ENCODE measurements at regions of chr3 and their contacts with region 1.

Region 1: DNA sequence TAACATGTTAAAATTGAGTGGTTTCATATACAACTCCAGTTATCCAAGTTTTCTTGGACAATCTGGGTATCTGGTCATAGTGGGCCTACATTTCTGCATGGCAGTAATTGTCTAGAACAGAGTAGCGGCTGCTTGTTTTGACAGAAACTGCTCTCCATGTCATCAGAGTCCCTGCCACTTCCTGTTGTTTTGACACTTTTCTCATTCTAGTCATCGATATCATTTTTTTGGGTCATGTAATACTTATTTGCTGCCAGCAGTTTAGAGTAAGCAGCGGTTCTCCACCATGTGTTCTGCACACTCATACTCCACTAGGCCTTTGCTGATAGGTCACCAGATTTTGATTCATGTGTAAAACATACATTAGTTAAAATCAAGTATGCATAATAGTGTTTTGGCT is 81.5 kb downstream of the SLC25A26 start:
- DNase-seq: peak; percentile 56
- H3K4me3 Mint-ChIP-seq: no peak overlapping the region
- H3K27ac Mint-ChIP-seq: peak overlapping the region; percentile 91
- H3K4me1 Mint-ChIP-seq: peaks cover 72% of the 10 kb centered on the region
- H3K27me3 Mint-ChIP-seq: no peaks in the 10 kb centered on the region

Region 2: DNA sequence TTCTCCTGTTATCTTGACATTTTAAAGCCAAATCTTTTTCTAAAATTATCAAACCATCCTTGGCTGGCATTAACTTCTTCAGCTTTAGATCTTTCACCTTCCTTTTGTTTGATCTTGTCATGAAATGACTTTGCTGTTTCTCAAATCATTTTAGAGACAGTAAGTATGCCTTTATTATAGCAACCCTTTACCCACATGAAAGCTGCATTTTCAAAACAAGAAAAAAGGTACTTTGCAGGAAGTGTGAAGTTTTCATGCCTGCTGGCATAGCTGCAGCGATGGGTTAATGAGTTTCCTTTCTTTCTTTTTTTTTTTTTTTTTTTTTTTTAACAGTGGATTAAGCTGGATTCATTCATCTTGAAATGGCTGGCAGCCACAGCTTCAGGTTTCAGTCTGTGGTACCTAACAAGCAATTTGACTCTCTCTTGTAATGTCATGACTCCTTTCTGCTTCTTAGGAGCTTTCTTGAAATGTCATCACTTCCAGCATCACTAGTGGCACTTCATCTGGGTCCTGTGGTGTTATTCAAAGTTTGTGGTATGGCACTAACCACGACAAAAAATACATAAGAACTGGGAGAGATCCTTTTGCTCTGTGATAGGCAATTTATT is 62.7 kb before region 1 on chr3:
- CTCF ChIA-PET with region 1: no interaction called
- intact Hi-C with region 1: loop called (anchors 1 kb)
- DNase-seq: peak; percentile 64
- H3K4me3 Mint-ChIP-seq: peak overlapping the region; percentile 5
- H3K27ac Mint-ChIP-seq: peak overlapping the region; percentile 86
- H3K4me1 Mint-ChIP-seq: peaks cover 30% of the 10 kb centered on the region
- H3K27me3 Mint-ChIP-seq: no peaks in the 10 kb centered on the region

Region 3: DNA sequence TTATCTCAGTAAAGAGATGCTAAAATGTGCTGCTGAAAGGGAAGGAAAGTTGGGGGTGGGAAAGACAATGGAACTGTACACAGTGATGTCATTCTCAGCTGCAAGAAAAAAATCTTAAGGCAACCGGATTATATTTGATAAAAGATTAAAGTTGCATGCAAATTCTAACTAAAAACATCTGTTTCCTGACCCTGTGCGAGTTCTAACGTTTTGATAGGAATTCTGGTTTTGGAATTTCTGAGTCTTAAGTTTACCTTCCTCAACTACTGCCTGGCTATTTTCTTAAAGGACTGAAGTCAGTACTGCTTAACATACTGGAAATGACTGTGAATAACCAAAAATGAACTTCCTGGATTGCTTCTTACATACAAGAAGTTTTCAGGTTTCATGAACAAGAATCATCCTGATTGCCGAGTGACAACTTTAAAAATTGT is 34.1 kb after region 1 on chr3:
- CTCF ChIA-PET with region 1: interaction called, 3 read pairs
- intact Hi-C with region 1: loop called (anchors 2 kb)
- DNase-seq: no peak
- H3K4me3 Mint-ChIP-seq: no peak overlapping the region
- H3K27ac Mint-ChIP-seq: peak overlapping the region; percentile 16
- H3K4me1 Mint-ChIP-seq: peaks cover 25% of the 10 kb centered on the region
- H3K27me3 Mint-ChIP-seq: no peaks in the 10 kb centered on the region

Region 4: DNA sequence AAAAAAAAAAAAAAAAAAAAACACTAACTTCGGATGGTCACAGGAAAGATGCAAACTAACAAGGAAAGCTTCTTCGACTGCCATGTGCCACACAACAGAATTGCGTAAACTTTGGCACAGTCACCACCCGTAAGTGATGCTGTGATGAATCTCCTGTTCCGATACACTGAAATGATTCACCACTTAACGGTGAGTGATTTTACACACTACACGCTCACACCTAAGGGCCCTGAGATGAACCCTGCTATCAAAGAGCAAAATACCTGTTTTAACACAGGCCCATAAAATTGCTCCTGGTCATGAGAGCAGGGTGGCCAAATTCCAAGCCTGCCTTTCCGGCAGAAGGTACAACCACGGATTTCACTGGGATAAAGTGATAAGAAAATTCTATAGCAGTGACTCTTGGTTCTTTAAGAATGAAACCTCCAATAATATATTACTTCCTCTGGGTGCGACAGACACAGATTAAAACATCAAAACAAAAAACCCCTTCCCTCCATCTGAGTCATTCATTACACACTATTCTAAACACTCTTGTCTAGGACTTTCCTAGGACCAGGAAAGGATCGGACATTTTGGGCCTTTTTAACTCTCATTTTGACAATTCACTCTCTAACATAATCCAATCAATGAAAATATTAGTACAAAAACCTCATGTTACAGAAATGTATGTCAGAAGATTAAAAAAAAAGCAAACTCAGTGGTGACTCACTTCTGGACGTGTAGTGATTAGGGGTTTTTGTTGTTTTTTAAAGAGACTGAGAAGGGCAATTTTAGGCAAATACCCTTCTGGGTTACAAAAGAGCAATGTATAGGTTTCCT is 170.2 kb after region 1 on chr3:
- CTCF ChIA-PET with region 1: no interaction called
- intact Hi-C with region 1: loop called (anchors 1 kb)
- DNase-seq: peak; percentile 77
- H3K4me3 Mint-ChIP-seq: peak overlapping the region; percentile 42
- H3K27ac Mint-ChIP-seq: peak overlapping the region; percentile 94
- H3K4me1 Mint-ChIP-seq: peaks cover 64% of the 10 kb centered on the region
- H3K27me3 Mint-ChIP-seq: no peaks in the 10 kb centered on the region

Region 5: DNA sequence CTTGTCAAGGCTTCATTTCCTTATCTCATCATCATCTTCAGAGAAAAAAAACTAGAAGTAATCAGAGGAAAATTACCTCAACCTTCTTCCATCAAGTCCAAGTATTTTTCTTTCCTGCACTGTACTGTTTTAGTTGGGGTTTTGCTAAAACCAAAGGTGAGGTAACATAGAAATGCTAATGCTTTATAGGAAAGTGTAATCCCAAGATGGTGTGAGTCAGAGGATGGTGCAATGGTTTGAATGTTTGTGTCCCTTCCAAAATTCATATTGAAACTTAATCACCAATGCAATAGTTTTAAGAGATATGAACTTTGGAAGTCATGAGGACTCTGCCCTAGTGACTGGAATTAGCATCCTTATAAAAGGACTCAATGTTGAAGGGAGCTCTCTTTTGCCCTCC is 775.4 kb after region 1 on chr3:
- CTCF ChIA-PET with region 1: no interaction called
- intact Hi-C with region 1: loop called (anchors 10 kb)
- DNase-seq: peak; percentile 16
- H3K4me3 Mint-ChIP-seq: no peak overlapping the region
- H3K27ac Mint-ChIP-seq: no peak overlapping the region
- H3K4me1 Mint-ChIP-seq: peaks cover 50% of the 10 kb centered on the region
- H3K27me3 Mint-ChIP-seq: no peaks in the 10 kb centered on the region

Measured in activated naive CD4-positive, alpha-beta T cell treated with anti-CD3 and anti-CD28 coated beads for 36 hours (primary cell).